Kidney (tissue), 22 donors: ENCODE measurements at regions of chr13 and their contacts with region 1.

Region 1: DNA sequence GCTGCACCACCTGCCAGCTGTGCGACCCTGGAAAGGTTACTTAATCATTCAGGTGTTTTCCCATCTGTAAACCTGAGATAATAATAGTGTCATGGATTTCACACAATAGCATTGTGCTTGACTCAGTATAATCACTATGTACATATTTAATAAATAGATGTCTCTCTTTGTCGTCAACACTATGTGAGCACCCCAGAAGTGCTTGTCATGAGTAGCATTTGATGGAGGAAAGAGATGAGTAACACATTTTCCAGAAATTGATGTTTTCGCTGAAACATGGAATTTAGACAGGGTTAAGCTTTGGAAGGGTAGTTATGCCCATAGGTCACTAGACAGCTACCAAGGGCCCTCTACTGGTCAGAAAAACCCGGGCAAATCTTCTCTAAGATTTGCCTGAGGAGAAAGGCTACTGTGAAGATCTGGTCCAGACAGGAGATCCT is 9.5 kb upstream of the MBNL2 start:
- DNase-seq: no peak
- H3K4me3 ChIP-seq: no peak overlapping the region
- H3K27ac ChIP-seq: no peak overlapping the region
- H3K4me1 ChIP-seq: no peaks in the 10 kb centered on the region
- H3K27me3 ChIP-seq: no peaks in the 10 kb centered on the region
- CTCF ChIP-seq: peak; percentile 36

Region 2: GRCh38 chr13:97124916-97125809 is 87.5 kb before region 1 on chr13:
- intact Hi-C with region 1: loop called (anchors 10 kb)
- DNase-seq: peak in 4 of 5 donors; percentile 75 to 89 (median 80)
- H3K4me3 ChIP-seq: no peak overlapping the region
- H3K27ac ChIP-seq: no peak overlapping the region
- H3K4me1 ChIP-seq: peaks cover 0 to 2% (median 0%) of the 10 kb centered on the region in 3 donors
- H3K27me3 ChIP-seq: no peaks in the 10 kb centered on the region
- CTCF ChIP-seq: no peak

Region 3: DNA sequence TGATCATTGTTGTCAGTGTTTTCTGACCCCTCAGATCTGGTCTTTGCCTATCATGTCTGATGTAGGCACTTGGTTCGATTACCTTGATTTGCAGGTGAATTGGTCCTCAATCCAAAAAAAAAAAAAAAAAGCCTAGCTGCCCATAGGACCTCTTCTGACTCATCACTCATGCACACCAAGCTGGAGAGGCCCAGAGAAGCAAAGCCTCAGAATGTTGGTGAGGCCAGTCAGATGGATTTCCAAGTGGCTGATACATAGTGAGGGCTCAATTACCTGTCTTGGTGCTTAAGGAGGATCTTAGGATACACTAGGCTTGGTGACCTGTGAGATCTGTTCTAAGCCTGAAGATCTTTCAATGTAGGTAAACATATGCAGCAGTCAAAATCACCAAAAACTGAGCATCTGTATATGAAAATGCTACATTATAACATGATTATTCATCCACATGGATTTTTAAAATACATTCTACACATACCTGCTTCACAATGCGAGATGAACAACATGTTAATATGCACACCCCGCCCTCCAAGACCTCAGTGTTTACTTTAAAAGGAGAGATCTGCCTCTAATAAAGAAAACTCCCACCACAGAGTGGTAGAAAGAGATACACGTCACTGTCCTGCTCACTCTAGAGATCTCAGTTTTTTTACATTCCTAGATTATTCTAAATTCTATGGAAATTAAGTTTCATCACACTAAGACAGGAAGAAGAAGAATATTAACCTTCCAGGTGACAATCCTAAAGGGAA is 141.5 kb after region 1 on chr13:
- intact Hi-C with region 1: no loop called
- DNase-seq: no peak
- H3K4me3 ChIP-seq: no peak overlapping the region
- H3K27ac ChIP-seq: peak overlapping the region in 1 of 2 donors; percentile 24
- H3K4me1 ChIP-seq: peaks cover 0 to 6% (median 0%) of the 10 kb centered on the region in 3 donors
- H3K27me3 ChIP-seq: no peaks in the 10 kb centered on the region
- CTCF ChIP-seq: no peak

Region 4: DNA sequence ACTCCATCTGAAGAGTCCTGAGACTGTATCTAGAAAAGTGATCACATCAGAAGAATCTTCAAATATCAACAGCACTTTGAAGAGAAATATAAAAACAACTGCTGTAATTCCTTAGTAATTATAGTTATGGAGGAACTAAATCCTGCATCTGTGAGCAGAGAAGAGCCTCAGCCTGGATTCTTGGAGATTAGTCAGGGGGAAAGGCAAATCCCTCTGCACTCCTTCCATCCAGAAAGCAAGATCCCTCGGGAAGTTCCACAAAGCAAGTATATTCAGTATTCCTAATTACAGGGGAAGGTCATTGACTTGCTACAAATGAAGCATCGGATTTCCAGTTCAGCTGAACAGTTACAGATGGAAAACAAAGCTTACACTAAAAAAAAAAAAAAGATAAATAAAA is 484.3 kb after region 1 on chr13:
- intact Hi-C with region 1: no loop called
- DNase-seq: no peak
- H3K4me3 ChIP-seq: no peak overlapping the region
- H3K27ac ChIP-seq: no peak overlapping the region
- H3K4me1 ChIP-seq: no peaks in the 10 kb centered on the region
- H3K27me3 ChIP-seq: no peaks in the 10 kb centered on the region
- CTCF ChIP-seq: no peak

Region 5: DNA sequence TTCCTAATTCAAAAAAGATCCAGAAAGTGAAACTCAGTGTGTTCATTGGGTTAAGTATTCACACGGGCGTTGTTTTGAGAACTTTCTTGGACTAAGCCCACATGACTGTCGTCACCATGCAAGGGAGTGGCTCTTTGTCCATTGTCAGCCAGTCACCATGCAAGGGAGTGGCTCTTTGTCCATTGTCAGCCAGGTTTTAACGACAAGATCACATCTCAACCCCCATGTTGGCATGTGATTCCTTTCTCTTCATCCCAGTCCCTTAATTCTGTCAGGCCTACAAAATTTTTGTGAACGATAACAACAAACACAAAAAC is 1445.6 kb after region 1 on chr13:
- intact Hi-C with region 1: no loop called
- DNase-seq: no peak
- H3K4me3 ChIP-seq: no peak overlapping the region
- H3K27ac ChIP-seq: no peak overlapping the region
- H3K4me1 ChIP-seq: no peaks in the 10 kb centered on the region
- H3K27me3 ChIP-seq: no peaks in the 10 kb centered on the region
- CTCF ChIP-seq: no peak